Ovary (tissue), 10 donors: ENCODE measurements at regions of chr6 and their contacts with region 1.

Region 1: DNA sequence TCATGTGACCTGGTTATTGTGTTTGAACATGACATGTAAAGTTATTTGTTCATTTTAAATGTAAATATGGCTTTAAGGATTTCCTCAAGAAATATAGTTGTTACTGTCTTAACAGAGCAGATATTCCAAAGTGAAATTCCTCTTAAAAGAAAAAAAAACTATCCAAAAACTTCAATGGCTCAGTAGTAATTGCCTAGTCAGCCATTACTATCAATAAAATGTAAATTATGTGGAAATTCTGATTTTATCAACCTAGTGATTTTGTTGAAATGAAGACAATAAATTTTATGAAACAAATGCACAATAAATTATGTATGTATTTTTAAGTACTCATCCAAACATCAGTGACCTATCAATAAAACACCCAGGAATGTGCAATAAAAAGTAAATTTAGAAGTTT is 463.3 kb downstream of the TENT5A start:
- DNase-seq: no peak
- H3K4me3 ChIP-seq: no peak overlapping the region
- H3K27ac ChIP-seq: no peak overlapping the region
- H3K4me1 ChIP-seq: no peaks in the 10 kb centered on the region
- H3K27me3 ChIP-seq: no peaks in the 10 kb centered on the region
- CTCF ChIP-seq: no peak
- EP300 ChIP-seq: no peak
- POLR2A ChIP-seq: no peak

Region 2: GRCh38 chr6:80060774-80061173 is 1228.5 kb before region 1 on chr6:
- intact Hi-C with region 1: loop called in 1 of 4 experiments (anchors 5 kb)
- DNase-seq: no peak
- H3K4me3 ChIP-seq: no peak overlapping the region
- H3K27ac ChIP-seq: no peak overlapping the region
- H3K4me1 ChIP-seq: no peaks in the 10 kb centered on the region
- H3K27me3 ChIP-seq: no peaks in the 10 kb centered on the region
- CTCF ChIP-seq: no peak
- EP300 ChIP-seq: no peak
- POLR2A ChIP-seq: no peak

Region 3: GRCh38 chr6:81708113-81708699 is 419.0 kb after region 1 on chr6:
- intact Hi-C with region 1: no loop called
- DNase-seq: no peak
- H3K4me3 ChIP-seq: no peak overlapping the region
- H3K27ac ChIP-seq: no peak overlapping the region
- H3K4me1 ChIP-seq: no peaks in the 10 kb centered on the region
- H3K27me3 ChIP-seq: no peaks in the 10 kb centered on the region
- CTCF ChIP-seq: no peak
- EP300 ChIP-seq: no peak
- POLR2A ChIP-seq: no peak